ENCODE measurements at regions of chr1 and their contacts with region 1.

Region 1: GRCh38 chr1:59046730-59047157 is 250.2 kb upstream of the FGGY start:
- DNase-seq: peak in 7 of 10 donors; percentile 19 to 54 (median 31)
- ATAC-seq: peak; percentile 87 to 89
- H3K4me3 Mint-ChIP-seq: peak overlapping the region in 9 of 10 donors; percentile 3 to 74 (median 57)
- H3K27ac Mint-ChIP-seq: peak overlapping the region; percentile 61 to 92 (median 90)
- H3K4me1 Mint-ChIP-seq: peaks cover 24 to 51% (median 47%) of the 10 kb centered on the region in 4 donors
- H3K27me3 Mint-ChIP-seq: no peaks in the 10 kb centered on the region

Region 2: GRCh38 chr1:59034925-59035324 is 11.8 kb before region 1 on chr1:
- POLR2A ChIA-PET with region 1: interaction called, 10 read pairs
- DNase-seq: no peak
- ATAC-seq: no peak
- H3K4me3 Mint-ChIP-seq: no peak overlapping the region
- H3K27ac Mint-ChIP-seq: peak overlapping the region in 1 of 10 donors; percentile 72
- H3K4me1 Mint-ChIP-seq: no peaks in the 10 kb centered on the region
- H3K27me3 Mint-ChIP-seq: no peaks in the 10 kb centered on the region

Region 3: DNA sequence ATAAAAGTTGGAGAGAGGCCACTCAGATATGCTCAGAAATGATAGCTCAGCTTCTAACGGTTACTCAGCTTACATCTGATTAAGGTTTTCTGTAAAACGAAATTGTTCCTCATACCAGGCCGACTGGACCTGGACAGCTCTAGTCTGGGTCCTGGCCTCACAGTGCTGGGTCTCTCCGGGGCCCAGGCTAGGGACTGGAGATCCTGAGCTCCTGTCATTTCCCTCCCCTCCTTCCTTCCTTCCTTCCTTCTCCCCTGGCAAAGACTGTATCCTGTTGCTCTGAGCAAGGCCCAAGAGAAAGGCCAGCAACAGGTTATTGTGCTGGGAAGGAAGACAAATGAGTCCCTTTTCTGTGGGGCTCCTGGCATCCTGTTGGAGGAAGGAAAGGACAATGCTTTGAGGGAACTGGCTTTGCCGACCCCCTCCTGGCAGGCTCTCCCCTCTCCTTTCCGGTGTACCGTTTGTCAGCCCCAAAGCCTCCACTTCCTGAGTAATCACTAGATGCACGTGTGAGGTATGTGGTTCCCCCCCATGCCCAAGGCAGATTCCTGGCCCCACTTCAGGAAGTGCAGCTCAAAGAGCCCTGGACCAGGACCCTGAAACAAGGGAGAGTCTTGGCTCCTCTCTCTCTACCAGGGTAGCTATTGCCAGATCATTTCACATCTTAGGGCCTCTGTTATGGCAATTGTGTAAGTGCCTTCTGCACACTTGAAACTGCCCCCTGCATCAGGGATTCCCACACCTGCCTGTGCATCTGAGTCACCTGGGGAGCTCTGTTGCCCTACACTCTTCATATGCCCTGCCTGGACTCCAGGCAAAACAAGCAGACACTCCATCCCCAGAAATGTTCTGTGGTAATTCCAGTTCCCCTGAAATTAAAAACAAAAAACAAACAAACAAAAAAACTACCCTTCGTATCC is 37.5 kb after region 1 on chr1:
- POLR2A ChIA-PET with region 1: no interaction called
- DNase-seq: peak in 1 of 10 donors; percentile 15
- ATAC-seq: peak in 1 of 2 donors; percentile 33
- H3K4me3 Mint-ChIP-seq: peak overlapping the region in 3 of 10 donors; percentile 8 to 58 (median 38)
- H3K27ac Mint-ChIP-seq: peak overlapping the region in 8 of 10 donors; percentile 1 to 82 (median 44)
- H3K4me1 Mint-ChIP-seq: peaks cover 7 to 12% (median 10%) of the 10 kb centered on the region in 4 donors
- H3K27me3 Mint-ChIP-seq: no peaks in the 10 kb centered on the region

Measured in naive thymus-derived CD8-positive, alpha-beta T cell (primary cell).